ENCODE measurements at regions of chr14 and their contacts with region 1.

Region 1: GRCh38 chr14:33510063-33510481 is 440.8 kb downstream of the EGLN3 start:
- DNase-seq: no peak
- H3K4me3 ChIP-seq: no peak overlapping the region
- H3K27ac ChIP-seq: no peak overlapping the region
- H3K4me1 ChIP-seq: no peaks in the 10 kb centered on the region
- H3K27me3 ChIP-seq: no peaks in the 10 kb centered on the region
- CTCF ChIP-seq: no peak
- POLR2A ChIP-seq: no peak

Region 2: GRCh38 chr14:33477797-33478196 is 32.3 kb before region 1 on chr14:
- intact Hi-C with region 1: loop called (anchors 1 kb)
- DNase-seq: no peak
- H3K4me3 ChIP-seq: no peak overlapping the region
- H3K27ac ChIP-seq: no peak overlapping the region
- H3K4me1 ChIP-seq: no peaks in the 10 kb centered on the region
- H3K27me3 ChIP-seq: no peaks in the 10 kb centered on the region
- CTCF ChIP-seq: no peak
- POLR2A ChIP-seq: no peak

Measured in vagina (tissue), 2 donors.